Psoas muscle (tissue), 8 donors: ENCODE measurements at regions of chr4 and their contacts with region 1.

Region 1: DNA sequence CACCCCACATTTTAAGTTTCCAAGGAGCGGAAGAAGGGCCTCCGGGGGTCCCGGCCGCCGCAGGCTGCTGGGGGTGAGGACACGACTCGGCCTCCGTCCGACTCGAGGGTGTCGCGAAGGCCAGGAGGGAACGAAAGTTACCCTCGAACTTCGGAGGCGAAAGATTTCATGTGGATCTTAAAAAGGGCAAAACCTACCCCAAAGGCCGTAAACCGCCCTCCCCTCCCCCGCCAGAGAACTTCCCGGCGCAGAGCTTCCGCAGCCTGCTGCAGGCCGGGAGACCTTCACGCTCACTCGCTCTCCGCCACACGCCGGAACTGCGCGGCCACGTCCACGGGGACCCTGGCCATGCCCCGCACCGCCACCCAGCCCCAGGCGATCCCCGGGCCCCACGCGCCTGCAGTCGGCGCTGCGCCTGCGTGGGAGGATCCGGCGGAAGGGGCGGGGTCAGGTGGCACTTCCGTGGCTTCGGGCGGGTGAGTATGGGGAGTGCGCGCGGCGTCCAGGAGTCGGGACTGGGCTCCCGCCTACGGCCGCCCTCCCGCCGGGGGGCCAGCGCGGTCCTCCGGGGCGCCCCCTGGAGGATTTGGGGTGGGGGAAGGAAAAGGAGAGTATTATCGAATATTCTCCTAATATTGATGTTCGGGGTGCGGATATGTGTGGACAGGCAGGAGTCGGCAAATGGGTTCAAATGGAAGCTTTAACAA is at the start of gene MMAA:
- DNase-seq: peak; percentile 97 to 98
- ATAC-seq: peak; percentile 98 to 99 (median 98)
- H3K4me3 ChIP-seq: peak within 1 kb of the TSS; percentile 83
- H3K27ac ChIP-seq: peak within 1 kb of the TSS; percentile 95
- H3K4me1 ChIP-seq: peaks cover 37% of the 10 kb centered on the region
- H3K27me3 ChIP-seq: no peaks in the 10 kb centered on the region
- CTCF ChIP-seq: peak; percentile 71
- total RNA-seq, gene MMAA: 13.3 to 21.9 (median 17.2) TPM

Region 2: GRCh38 chr4:145154573-145154972 is 464.5 kb before region 1 on chr4:
- intact Hi-C with region 1: loop called (anchors 5 kb)
- DNase-seq: no peak
- ATAC-seq: peak; percentile 81 to 91 (median 84)
- H3K4me3 ChIP-seq: no peak overlapping the region
- H3K27ac ChIP-seq: peak overlapping the region; percentile 63
- H3K4me1 ChIP-seq: peaks cover 19% of the 10 kb centered on the region
- H3K27me3 ChIP-seq: no peaks in the 10 kb centered on the region
- CTCF ChIP-seq: peak; percentile 57

Region 3: GRCh38 chr4:145216535-145216934 is 402.6 kb before region 1 on chr4:
- intact Hi-C with region 1: loop called in 1 of 2 experiments (anchors 5 kb)
- DNase-seq: no peak
- ATAC-seq: no peak
- H3K4me3 ChIP-seq: no peak overlapping the region
- H3K27ac ChIP-seq: no peak overlapping the region
- H3K4me1 ChIP-seq: peaks cover 7% of the 10 kb centered on the region
- H3K27me3 ChIP-seq: no peaks in the 10 kb centered on the region
- CTCF ChIP-seq: peak; percentile 50

Region 4: DNA sequence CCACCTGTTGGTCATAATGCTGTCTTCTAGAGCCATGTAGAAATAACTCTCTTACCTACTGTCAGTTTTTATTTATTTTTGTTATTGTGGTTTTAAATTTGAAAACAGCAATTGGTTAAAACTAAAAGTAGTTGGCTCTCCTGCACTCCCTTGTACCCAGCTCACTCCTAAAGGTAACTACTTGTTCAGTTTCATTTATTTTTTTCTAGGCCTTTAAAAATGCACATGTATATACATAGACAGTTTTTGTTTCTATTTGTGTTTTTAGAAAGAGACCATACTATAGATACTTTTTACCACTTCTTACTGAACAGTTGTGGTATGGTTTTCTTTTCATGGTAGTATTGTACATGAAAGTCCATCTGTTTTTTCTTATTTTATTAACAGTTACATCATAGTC is 120.7 kb before region 1 on chr4:
- intact Hi-C with region 1: loop called in 1 of 2 experiments (anchors 10 kb)
- DNase-seq: no peak
- ATAC-seq: no peak
- H3K4me3 ChIP-seq: peak overlapping the region; percentile 33
- H3K27ac ChIP-seq: no peak overlapping the region
- H3K4me1 ChIP-seq: peaks cover 49% of the 10 kb centered on the region
- H3K27me3 ChIP-seq: no peaks in the 10 kb centered on the region
- CTCF ChIP-seq: no peak

Region 5: GRCh38 chr4:145602129-145602760 is 16.8 kb before region 1 on chr4:
- intact Hi-C with region 1: no loop called
- DNase-seq: no peak
- ATAC-seq: peak in 1 of 4 donors; percentile 59
- H3K4me3 ChIP-seq: no peak overlapping the region
- H3K27ac ChIP-seq: no peak overlapping the region
- H3K4me1 ChIP-seq: no peaks in the 10 kb centered on the region
- H3K27me3 ChIP-seq: no peaks in the 10 kb centered on the region
- CTCF ChIP-seq: no peak

Region 6: DNA sequence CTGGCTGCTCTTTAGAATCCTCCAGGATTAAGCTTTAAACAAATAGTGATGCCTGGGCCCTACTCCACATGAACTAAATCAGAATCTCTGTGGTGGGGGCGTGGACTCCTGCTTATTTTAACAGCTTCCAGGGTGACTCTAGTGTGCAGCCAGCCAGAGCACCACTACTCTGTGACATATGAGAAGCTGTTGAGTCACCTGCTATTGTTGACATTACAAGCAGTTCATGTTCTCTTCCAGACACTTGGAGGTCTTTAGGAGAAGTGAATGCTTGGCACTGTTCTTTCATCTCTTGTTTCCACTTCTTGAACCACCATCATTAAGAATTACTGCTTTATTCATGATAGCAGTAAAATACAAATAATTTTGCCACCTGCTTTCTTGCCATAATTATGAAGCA is 60.4 kb after region 1 on chr4:
- intact Hi-C with region 1: loop called in 1 of 2 experiments (anchors 5 kb)
- DNase-seq: peak; percentile 45 to 79
- ATAC-seq: peak; percentile 95 to 98 (median 96)
- H3K4me3 ChIP-seq: peak overlapping the region; percentile 46
- H3K27ac ChIP-seq: peak overlapping the region; percentile 93
- H3K4me1 ChIP-seq: peaks cover 16% of the 10 kb centered on the region
- H3K27me3 ChIP-seq: no peaks in the 10 kb centered on the region
- CTCF ChIP-seq: no peak

Region 7: DNA sequence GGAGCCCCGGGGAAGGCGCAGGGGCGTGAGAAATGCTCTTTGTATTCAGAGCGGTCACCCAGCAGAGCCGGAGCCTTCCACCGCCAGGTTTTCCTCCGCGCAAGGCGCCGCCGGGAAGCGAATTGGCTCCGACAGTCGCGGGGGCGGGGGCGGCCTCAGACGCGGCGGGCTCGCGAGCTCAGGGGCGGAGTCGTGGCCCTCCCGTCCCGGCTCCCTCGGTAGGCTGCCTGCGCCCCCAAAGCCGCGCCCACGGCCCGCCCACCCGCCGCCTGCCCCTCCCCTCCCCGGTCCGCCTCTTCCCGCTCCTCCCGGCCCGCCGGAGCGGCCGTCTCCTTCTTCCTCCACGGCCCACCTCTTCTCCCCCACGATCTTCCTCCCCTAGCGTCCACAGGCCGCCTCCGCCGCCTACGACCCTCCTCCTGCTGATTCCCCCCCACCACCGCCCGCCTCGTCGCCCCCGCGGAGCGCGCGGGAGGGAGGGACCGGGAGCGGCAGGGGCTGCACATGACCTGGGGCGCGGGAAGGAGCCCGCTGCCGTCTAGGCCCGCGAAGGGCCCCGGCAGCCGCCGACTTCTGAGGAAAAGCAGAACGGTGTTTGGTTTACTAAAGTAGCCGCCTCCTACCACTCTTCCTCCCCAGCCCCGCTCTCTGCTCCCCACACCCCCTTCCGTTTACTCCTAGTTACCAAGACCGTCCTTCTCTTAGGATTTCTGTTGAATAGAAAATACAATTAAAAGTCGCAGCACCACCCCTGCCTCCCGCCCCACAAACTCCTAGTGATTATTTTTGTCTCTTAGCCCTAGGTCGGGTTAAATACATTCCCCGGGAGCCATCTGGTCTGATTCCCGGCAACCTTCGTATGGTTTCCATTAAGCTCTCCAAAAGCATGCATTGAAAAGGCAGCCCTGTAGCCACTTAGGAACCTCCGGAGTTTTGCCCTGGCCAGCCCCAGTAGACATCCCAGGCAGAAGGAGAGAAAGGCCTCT is 114.1 kb after region 1 on chr4:
- intact Hi-C with region 1: loop called (anchors 1 to 5 kb)
- DNase-seq: peak; percentile 97
- ATAC-seq: peak; percentile 66 to 78 (median 69)
- H3K4me3 ChIP-seq: peak overlapping the region; percentile 68
- H3K27ac ChIP-seq: peak overlapping the region; percentile 98
- H3K4me1 ChIP-seq: peaks cover 40% of the 10 kb centered on the region
- H3K27me3 ChIP-seq: no peaks in the 10 kb centered on the region
- CTCF ChIP-seq: peak; percentile 11

Region 8: GRCh38 chr4:145808021-145808650 is 189.1 kb after region 1 on chr4:
- intact Hi-C with region 1: loop called in 1 of 2 experiments (anchors 10 kb)
- DNase-seq: no peak
- ATAC-seq: peak; percentile 76 to 87 (median 80)
- H3K4me3 ChIP-seq: no peak overlapping the region
- H3K27ac ChIP-seq: peak overlapping the region; percentile 62
- H3K4me1 ChIP-seq: peaks cover 35% of the 10 kb centered on the region
- H3K27me3 ChIP-seq: no peaks in the 10 kb centered on the region
- CTCF ChIP-seq: no peak